ENCODE measurements at regions of chr3 and their contacts with region 1.

Region 1: GRCh38 chr3:13884851-13885703 is 5.2 kb upstream of the WNT7A start:
- DNase-seq: peak; percentile 54 to 86 (median 72)
- ATAC-seq: peak; percentile 77 to 84
- H3K4me3 Mint-ChIP-seq: no peak overlapping the region
- H3K27ac Mint-ChIP-seq: peak overlapping the region in 2 of 10 donors; percentile 25 to 77
- H3K4me1 Mint-ChIP-seq: peaks cover 3 to 21% (median 12%) of the 10 kb centered on the region in 4 donors
- H3K27me3 Mint-ChIP-seq: peaks cover 10 to 49% (median 24%) of the 10 kb centered on the region in 5 donors

Region 2: GRCh38 chr3:13650210-13651056 is 234.6 kb before region 1 on chr3:
- POLR2A ChIA-PET with region 1: interaction called, 129 read pairs
- DNase-seq: peak; percentile 78 to 93 (median 86)
- ATAC-seq: peak; percentile 89 to 92
- H3K4me3 Mint-ChIP-seq: peak overlapping the region; percentile 21 to 79 (median 63)
- H3K27ac Mint-ChIP-seq: peak overlapping the region; percentile 9 to 89 (median 68)
- H3K4me1 Mint-ChIP-seq: peaks cover 30 to 62% (median 49%) of the 10 kb centered on the region in 4 donors
- H3K27me3 Mint-ChIP-seq: peaks cover 10 to 22% (median 16%) of the 10 kb centered on the region in 5 donors

Region 3: GRCh38 chr3:13866041-13866965 is 18.8 kb before region 1 on chr3:
- POLR2A ChIA-PET with region 1: interaction called, 69 read pairs
- DNase-seq: peak; percentile 26 to 87 (median 67)
- ATAC-seq: peak; percentile 86 to 91
- H3K4me3 Mint-ChIP-seq: peak overlapping the region; percentile 65 to 82 (median 78)
- H3K27ac Mint-ChIP-seq: peak overlapping the region; percentile 81 to 99 (median 95)
- H3K4me1 Mint-ChIP-seq: peaks cover 30 to 72% (median 53%) of the 10 kb centered on the region in 4 donors
- H3K27me3 Mint-ChIP-seq: peaks cover 0 to 5% (median 0%) of the 10 kb centered on the region in 5 donors

Region 4: GRCh38 chr3:14439579-14440518 is 554.8 kb after region 1 on chr3:
- POLR2A ChIA-PET with region 1: no interaction called
- DNase-seq: no peak
- ATAC-seq: no peak
- H3K4me3 Mint-ChIP-seq: no peak overlapping the region
- H3K27ac Mint-ChIP-seq: peak overlapping the region in 7 of 10 donors; percentile 35 to 90 (median 57)
- H3K4me1 Mint-ChIP-seq: peaks cover 13 to 53% (median 41%) of the 10 kb centered on the region in 4 donors
- H3K27me3 Mint-ChIP-seq: no peaks in the 10 kb centered on the region